ENCODE measurements at regions of chr1 and their contacts with region 1.

Region 1: GRCh38 chr1:183567584-183567983 is 22.7 kb downstream of the NCF2 start:
- DNase-seq: no peak
- ATAC-seq: peak; percentile 15
- H3K4me3 ChIP-seq: no peak overlapping the region
- H3K27ac ChIP-seq: no peak overlapping the region
- H3K4me1 ChIP-seq: peaks cover 22% of the 10 kb centered on the region
- H3K27me3 ChIP-seq: no peaks in the 10 kb centered on the region
- CTCF ChIP-seq: no peak
- EP300 ChIP-seq: no peak
- POLR2A ChIP-seq: no peak
- RAD21 ChIP-seq: no peak

Region 2: DNA sequence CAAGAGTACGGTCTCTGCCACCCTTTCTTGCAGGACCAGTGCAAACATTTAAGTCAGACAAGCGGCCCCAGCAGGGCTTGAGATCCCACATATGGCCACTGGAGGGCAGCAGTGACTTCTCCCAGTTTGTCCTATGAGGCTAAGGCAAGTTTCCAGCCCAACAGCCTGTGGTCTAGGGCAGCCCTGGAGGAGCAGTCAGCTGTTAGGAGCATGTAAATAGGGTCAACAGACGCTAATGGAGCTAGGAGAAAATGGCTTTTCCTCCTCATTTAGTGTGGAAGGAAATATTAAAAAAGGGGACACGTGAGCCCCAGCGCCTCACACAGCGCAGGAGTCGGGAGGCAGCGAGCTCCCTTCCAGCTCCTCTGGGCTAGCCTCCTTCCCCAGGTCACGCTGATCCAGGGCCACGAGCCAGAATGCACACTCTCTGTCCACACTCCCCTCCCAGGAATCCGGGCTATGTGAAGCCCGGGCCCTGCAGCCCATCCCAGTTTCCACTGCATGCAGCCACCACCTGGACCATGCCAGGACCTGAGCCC is 286.0 kb before region 1 on chr1:
- CTCF ChIA-PET with region 1: no interaction called
- POLR2A ChIA-PET with region 1: no interaction called
- in situ Hi-C with region 1: loop called (anchors 25 kb)
- intact Hi-C with region 1: no loop called
- DNase-seq: peak; percentile 64
- ATAC-seq: peak; percentile 93
- H3K4me3 ChIP-seq: no peak overlapping the region
- H3K27ac ChIP-seq: no peak overlapping the region
- H3K4me1 ChIP-seq: no peaks in the 10 kb centered on the region
- H3K27me3 ChIP-seq: peaks cover 4 to 33% of the 10 kb centered on the region in 2 experiments; a peak in 3 of 5 replicates
- CTCF ChIP-seq: peak; percentile 87
- EP300 ChIP-seq: no peak
- POLR2A ChIP-seq: no peak
- RAD21 ChIP-seq: peak; percentile 63

Region 3: DNA sequence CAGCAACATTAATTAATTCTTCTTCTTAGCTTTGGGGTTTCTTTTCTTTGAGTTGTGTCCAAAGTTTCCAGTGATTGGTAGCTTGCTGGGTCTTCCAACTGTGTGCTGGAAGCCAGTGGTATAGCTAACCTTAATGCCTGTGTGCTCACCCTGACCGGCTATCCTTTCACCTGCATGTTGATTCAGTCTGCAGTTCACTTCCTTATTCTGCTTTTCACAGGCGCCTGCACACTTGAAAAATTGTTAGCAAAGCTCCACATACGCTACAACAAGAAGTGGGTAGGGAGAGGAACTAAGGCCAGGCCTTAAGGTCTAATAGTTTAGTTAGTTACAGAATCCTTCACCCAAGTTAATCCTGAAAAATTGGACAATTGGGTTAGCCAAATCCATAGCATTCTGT is 13.0 kb before region 1 on chr1:
- CTCF ChIA-PET with region 1: no interaction called
- POLR2A ChIA-PET with region 1: no interaction called
- in situ Hi-C with region 1: no loop called
- intact Hi-C with region 1: no loop called
- DNase-seq: no peak
- ATAC-seq: no peak
- H3K4me3 ChIP-seq: no peak overlapping the region
- H3K27ac ChIP-seq: no peak overlapping the region
- H3K4me1 ChIP-seq: no peaks in the 10 kb centered on the region
- H3K27me3 ChIP-seq: no peaks in the 10 kb centered on the region
- CTCF ChIP-seq: no peak
- EP300 ChIP-seq: no peak
- POLR2A ChIP-seq: no peak
- RAD21 ChIP-seq: no peak

Measured in HepG2 (cell line).